Right lobe of liver (tissue), 6 donors: ENCODE measurements at regions of chr5 and their contacts with region 1.

Region 1: GRCh38 chr5:154478224-154478565 is at the start of gene HAND1:
- DNase-seq: no peak
- ATAC-seq: peak; percentile 60 to 79 (median 65)
- H3K4me3 ChIP-seq: no peak within 1 kb of the TSS
- H3K27ac ChIP-seq: no peak within 1 kb of the TSS
- H3K4me1 ChIP-seq: peaks cover 0 to 20% (median 0%) of the 10 kb centered on the region in 4 donors
- H3K27me3 ChIP-seq: peaks cover 47 to 79% of the 10 kb centered on the region in 2 donors
- CTCF ChIP-seq: no peak
- POLR2A ChIP-seq: no peak
- total RNA-seq, gene HAND1: not detected

Region 2: GRCh38 chr5:154302161-154302560 is 176.0 kb before region 1 on chr5:
- intact Hi-C with region 1: no loop called
- DNase-seq: peak in 1 of 3 donors; percentile 49
- ATAC-seq: peak in 1 of 4 donors; percentile 17
- H3K4me3 ChIP-seq: no peak overlapping the region
- H3K27ac ChIP-seq: no peak overlapping the region
- H3K4me1 ChIP-seq: peaks cover 0 to 2% (median under 1%) of the 10 kb centered on the region in 4 donors
- H3K27me3 ChIP-seq: no peaks in the 10 kb centered on the region
- CTCF ChIP-seq: no peak
- POLR2A ChIP-seq: no peak

Region 3: DNA sequence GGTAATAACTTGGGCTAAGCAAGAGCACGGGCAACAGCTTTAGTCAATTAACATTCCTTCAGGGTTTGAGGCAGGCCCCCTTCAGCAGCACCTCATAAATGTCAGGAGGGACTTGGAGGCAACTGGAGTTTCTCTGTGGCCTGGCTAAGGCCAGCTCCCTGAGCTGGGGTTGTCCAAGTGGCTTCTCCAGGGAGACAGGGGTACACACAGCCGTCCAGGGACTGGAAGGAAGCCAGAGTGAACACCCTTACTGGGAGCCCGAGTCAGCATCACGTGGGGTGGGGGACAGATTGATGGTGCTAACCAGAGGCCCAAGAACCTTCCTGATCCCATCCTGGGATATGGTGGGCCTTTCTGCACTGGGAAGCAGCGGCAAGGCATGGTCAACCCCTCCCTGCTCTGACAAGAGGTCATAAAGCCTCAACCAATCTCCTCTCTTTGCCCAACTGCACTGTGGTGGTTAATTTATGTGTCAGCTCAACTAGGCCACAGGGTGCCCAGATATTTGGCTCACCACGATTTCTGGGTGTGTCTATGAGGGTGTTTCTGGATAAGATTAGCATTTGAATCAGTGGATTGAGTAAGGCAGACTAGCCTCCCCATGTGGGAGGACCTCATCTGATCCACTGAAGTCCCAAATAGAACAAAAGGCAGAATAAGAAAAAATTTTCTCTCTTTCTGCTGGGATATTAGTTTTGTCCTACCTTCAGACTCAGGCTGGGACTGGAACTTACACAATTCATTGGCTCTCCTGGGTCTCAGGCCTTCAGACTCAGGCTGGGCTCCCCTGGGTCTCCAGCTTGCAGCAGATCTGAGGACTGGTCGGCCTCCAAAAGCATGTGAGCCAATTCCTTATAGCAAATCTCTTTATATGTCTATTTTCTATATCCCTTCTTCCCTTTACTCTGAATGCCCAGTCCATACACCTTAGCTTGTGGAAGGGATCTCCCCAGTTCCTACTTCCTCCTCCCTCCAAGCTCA is 149.8 kb after region 1 on chr5:
- intact Hi-C with region 1: loop called in 1 of 2 experiments (anchors 10 kb)
- DNase-seq: no peak
- ATAC-seq: no peak
- H3K4me3 ChIP-seq: no peak overlapping the region
- H3K27ac ChIP-seq: no peak overlapping the region
- H3K4me1 ChIP-seq: no peaks in the 10 kb centered on the region
- H3K27me3 ChIP-seq: no peaks in the 10 kb centered on the region
- CTCF ChIP-seq: no peak
- POLR2A ChIP-seq: no peak